GM10248 (cell line): ENCODE measurements at regions of chr3 and their contacts with region 1.

Region 1: GRCh38 chr3:181534781-181535221 is 176.9 kb upstream of the SOX2 start:
- DNase-seq: no peak
- CTCF ChIP-seq: no peak

Region 2: DNA sequence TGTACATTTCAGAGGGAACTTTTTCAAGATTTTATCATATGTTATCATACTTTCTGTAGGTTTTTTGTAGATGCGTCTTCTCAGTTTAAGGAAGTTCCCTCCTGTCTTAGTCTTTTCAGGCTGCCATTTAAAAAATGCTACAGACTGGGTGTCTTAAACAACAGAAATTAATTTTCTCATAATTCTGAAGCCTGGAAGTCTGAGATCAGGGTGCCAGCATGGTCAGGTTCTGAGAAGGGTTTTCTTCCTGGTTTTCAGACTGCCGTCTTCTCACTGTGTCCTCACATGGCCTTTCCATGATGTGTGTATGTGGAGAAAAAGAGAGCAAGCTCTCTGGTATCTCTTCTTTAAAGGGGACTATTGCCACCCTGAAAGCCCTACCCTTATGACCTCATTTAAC is 13.0 kb before region 1 on chr3:
- CTCF ChIA-PET with region 1: interaction called, 10 read pairs
- POLR2A ChIA-PET with region 1: no interaction called
- DNase-seq: no peak
- CTCF ChIP-seq: no peak